ENCODE measurements at regions of chr15 and their contacts with region 1.

Region 1: GRCh38 chr15:38129531-38130204 is 123.0 kb upstream of the SPRED1 start:
- DNase-seq: peak; percentile 96
- H3K4me3 ChIP-seq: peak overlapping the region; percentile 31 to 45 (median 36)
- H3K27ac ChIP-seq: peak overlapping the region; percentile 73 to 85 (median 81)
- H3K4me1 ChIP-seq: peaks cover 17 to 37% (median 27%) of the 10 kb centered on the region in 4 donors
- H3K27me3 ChIP-seq: no peaks in the 10 kb centered on the region
- CTCF ChIP-seq: peak in 1 of 3 experiments; percentile 2
- EP300 ChIP-seq: peak; percentile 53
- POLR2A ChIP-seq: no peak

Region 2: GRCh38 chr15:38002883-38003477 is 126.7 kb before region 1 on chr15:
- intact Hi-C with region 1: loop called (anchors 10 kb)
- DNase-seq: no peak
- H3K4me3 ChIP-seq: no peak overlapping the region
- H3K27ac ChIP-seq: no peak overlapping the region
- H3K4me1 ChIP-seq: peaks cover 0 to 9% (median 7%) of the 10 kb centered on the region in 4 donors
- H3K27me3 ChIP-seq: no peaks in the 10 kb centered on the region
- CTCF ChIP-seq: peak; percentile 23 to 48 (median 45)
- EP300 ChIP-seq: no peak
- POLR2A ChIP-seq: no peak

Region 3: GRCh38 chr15:38041576-38041975 is 88.1 kb before region 1 on chr15:
- intact Hi-C with region 1: no loop called
- DNase-seq: no peak
- H3K4me3 ChIP-seq: no peak overlapping the region
- H3K27ac ChIP-seq: no peak overlapping the region
- H3K4me1 ChIP-seq: no peaks in the 10 kb centered on the region
- H3K27me3 ChIP-seq: no peaks in the 10 kb centered on the region
- CTCF ChIP-seq: no peak
- EP300 ChIP-seq: no peak
- POLR2A ChIP-seq: no peak

Region 4: GRCh38 chr15:38072348-38073177 is 57.1 kb before region 1 on chr15:
- intact Hi-C with region 1: loop called (anchors 5 kb)
- DNase-seq: no peak
- H3K4me3 ChIP-seq: peak overlapping the region; percentile 58 to 70 (median 64)
- H3K27ac ChIP-seq: peak overlapping the region; percentile 80 to 87 (median 84)
- H3K4me1 ChIP-seq: peaks cover 22 to 42% (median 40%) of the 10 kb centered on the region in 4 donors
- H3K27me3 ChIP-seq: no peaks in the 10 kb centered on the region
- CTCF ChIP-seq: peak in 2 of 3 experiments; percentile 13 to 25
- EP300 ChIP-seq: no peak
- POLR2A ChIP-seq: no peak

Region 5: DNA sequence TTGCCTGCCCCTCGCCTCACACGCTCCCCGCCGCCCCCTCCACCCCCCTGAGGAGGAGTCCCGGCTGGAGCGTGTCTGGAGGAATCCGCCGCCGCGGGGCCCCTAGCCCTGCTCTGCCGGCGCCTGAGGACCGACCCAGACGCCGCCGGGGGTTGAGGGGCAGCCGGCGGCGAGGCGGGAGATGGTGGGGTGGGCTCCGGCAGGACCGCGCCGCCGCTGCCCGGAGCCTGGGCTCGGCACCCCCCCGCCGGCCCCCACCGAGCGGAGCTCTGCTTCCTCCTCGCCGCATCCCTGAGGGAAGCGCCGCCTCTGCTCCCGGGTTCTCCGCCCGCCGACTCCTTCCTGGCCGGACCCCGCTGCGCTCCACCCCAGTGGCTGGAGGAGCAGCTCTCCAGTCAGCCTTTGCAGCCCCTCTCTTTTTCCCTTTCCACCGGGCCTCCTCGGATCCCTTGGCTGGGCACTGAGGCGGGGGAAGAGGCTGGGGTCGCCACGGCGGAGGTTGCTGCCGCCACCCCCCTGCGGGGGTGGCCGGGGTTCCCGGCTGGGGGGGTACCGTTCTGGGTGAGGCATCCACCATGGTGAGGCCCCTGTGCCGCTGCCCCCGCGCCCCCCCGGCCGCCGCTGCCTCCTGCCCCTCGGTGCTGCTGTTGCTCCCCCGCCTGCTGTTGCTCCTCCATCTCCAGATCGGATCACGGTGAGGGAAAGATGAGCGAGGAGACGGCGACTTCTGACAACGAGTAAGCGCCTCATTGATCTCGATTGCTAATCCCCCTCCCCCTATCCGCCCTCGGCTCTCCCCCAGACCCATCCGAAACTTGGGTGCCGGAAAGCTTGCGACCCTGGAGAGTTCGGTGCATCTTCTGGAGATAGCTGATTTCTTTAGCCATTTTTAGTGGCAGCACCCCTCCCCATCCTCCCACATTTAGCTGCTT is 123.1 kb after region 1 on chr15 and contains the start of gene SPRED1:
- intact Hi-C with region 1: loop called (anchors 5 kb)
- DNase-seq: no peak
- H3K4me3 ChIP-seq: peak within 1 kb of the TSS; percentile 91 to 99 (median 98)
- H3K27ac ChIP-seq: peak within 1 kb of the TSS; percentile 99 to 100 (median 99)
- H3K4me1 ChIP-seq: peaks cover 13 to 56% (median 39%) of the 10 kb centered on the region in 4 donors
- H3K27me3 ChIP-seq: no peaks in the 10 kb centered on the region
- CTCF ChIP-seq: no peak
- EP300 ChIP-seq: no peak
- POLR2A ChIP-seq: no peak
- total RNA-seq, gene SPRED1: 14.5 to 31.1 (median 19.0) TPM